T-cell (primary cell): ENCODE measurements at regions of chr2 and their contacts with region 1.

Region 1: GRCh38 chr2:101546376-101547058 is 71.6 kb upstream of the RFX8 start:
- DNase-seq: no peak
- ATAC-seq: no peak
- H3K4me3 ChIP-seq: no peak overlapping the region
- H3K4me3 Mint-ChIP-seq: no peak overlapping the region
- H3K27ac ChIP-seq: no peak overlapping the region
- H3K27ac Mint-ChIP-seq: no peak overlapping the region
- H3K4me1 ChIP-seq: peaks cover 4% of the 10 kb centered on the region in 2 experiments
- H3K4me1 Mint-ChIP-seq: peaks cover 8 to 13% (median 11%) of the 10 kb centered on the region in 3 donors
- H3K27me3 ChIP-seq: peaks cover 0 to 2% of the 10 kb centered on the region in 2 experiments
- H3K27me3 Mint-ChIP-seq: no peaks in the 10 kb centered on the region

Region 2: GRCh38 chr2:101568969-101569368 is 22.5 kb after region 1 on chr2:
- CTCF ChIA-PET with region 1: no interaction called
- POLR2A ChIA-PET with region 1: interaction called in 1 of 2 experiments, 13 read pairs
- DNase-seq: no peak
- ATAC-seq: no peak
- H3K4me3 ChIP-seq: no peak overlapping the region
- H3K4me3 Mint-ChIP-seq: no peak overlapping the region
- H3K27ac ChIP-seq: no peak overlapping the region
- H3K27ac Mint-ChIP-seq: peak overlapping the region in 1 of 2 donors; percentile 28
- H3K4me1 ChIP-seq: peaks cover 9 to 20% of the 10 kb centered on the region in 2 experiments
- H3K4me1 Mint-ChIP-seq: peaks cover 59 to 61% (median 60%) of the 10 kb centered on the region in 3 donors
- H3K27me3 ChIP-seq: peaks cover 0 to 6% of the 10 kb centered on the region in 2 experiments
- H3K27me3 Mint-ChIP-seq: no peaks in the 10 kb centered on the region